ENCODE measurements at regions of chr16 and their contacts with region 1.

Region 1: GRCh38 chr16:84617791-84618580 is at the start of gene COTL1:
- DNase-seq: peak; percentile 86 to 96 (median 90)
- ATAC-seq: peak; percentile 94
- H3K4me3 ChIP-seq: peak within 1 kb of the TSS; percentile 70
- H3K4me3 Mint-ChIP-seq: peak within 1 kb of the TSS; percentile 95 to 99 (median 97)
- H3K27ac ChIP-seq: peak within 1 kb of the TSS; percentile 68
- H3K27ac Mint-ChIP-seq: peak within 1 kb of the TSS; percentile 82 to 95 (median 91)
- H3K4me1 ChIP-seq: peaks cover 32 to 39% of the 10 kb centered on the region in 2 donors
- H3K4me1 Mint-ChIP-seq: peaks cover 33 to 64% (median 53%) of the 10 kb centered on the region in 7 donors
- H3K27me3 ChIP-seq: no peaks in the 10 kb centered on the region
- H3K27me3 Mint-ChIP-seq: peaks cover 0 to 14% (median 0%) of the 10 kb centered on the region in 5 donors
- total RNA-seq, gene COTL1: 84.2 to 704 (median 172) TPM

Region 2: DNA sequence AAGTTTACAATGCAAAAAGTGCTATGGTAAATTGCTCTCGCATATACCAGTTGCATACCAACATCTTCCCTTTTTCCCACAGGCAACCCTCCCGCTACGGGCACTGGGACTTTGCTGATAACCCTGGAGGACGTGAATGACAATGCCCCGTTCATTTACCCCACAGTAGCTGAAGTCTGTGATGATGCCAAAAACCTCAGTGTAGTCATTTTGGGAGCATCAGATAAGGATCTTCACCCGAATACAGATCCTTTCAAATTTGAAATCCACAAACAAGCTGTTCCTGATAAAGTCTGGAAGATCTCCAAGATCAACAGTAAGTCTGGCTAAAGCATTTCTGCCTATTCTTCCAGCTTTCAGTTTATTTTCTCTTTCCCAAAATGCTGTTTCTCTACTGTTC is 838.1 kb before region 1 on chr16:
- CTCF ChIA-PET with region 1: no interaction called
- POLR2A ChIA-PET with region 1: no interaction called
- intact Hi-C with region 1: no loop called
- DNase-seq: no peak
- ATAC-seq: no peak
- H3K4me3 ChIP-seq: no peak overlapping the region
- H3K4me3 Mint-ChIP-seq: no peak overlapping the region
- H3K27ac ChIP-seq: no peak overlapping the region
- H3K27ac Mint-ChIP-seq: no peak overlapping the region
- H3K4me1 ChIP-seq: no peaks in the 10 kb centered on the region
- H3K4me1 Mint-ChIP-seq: no peaks in the 10 kb centered on the region
- H3K27me3 ChIP-seq: no peaks in the 10 kb centered on the region
- H3K27me3 Mint-ChIP-seq: peaks cover 8 to 28% (median 14%) of the 10 kb centered on the region in 5 donors

Region 3: GRCh38 chr16:84194470-84195200 is 423.4 kb before region 1 on chr16:
- CTCF ChIA-PET with region 1: no interaction called
- POLR2A ChIA-PET with region 1: no interaction called
- intact Hi-C with region 1: loop called in 1 of 2 experiments (anchors 5 kb)
- DNase-seq: peak in 7 of 9 donors; percentile 25 to 62 (median 48)
- ATAC-seq: peak; percentile 63
- H3K4me3 ChIP-seq: peak overlapping the region; percentile 28
- H3K4me3 Mint-ChIP-seq: peak overlapping the region; percentile 25 to 85 (median 75)
- H3K27ac ChIP-seq: peak overlapping the region; percentile 42
- H3K27ac Mint-ChIP-seq: peak overlapping the region; percentile 51 to 92 (median 72)
- H3K4me1 ChIP-seq: peaks cover 0 to 18% of the 10 kb centered on the region in 2 donors
- H3K4me1 Mint-ChIP-seq: peaks cover 18 to 20% (median 20%) of the 10 kb centered on the region in 7 donors
- H3K27me3 ChIP-seq: no peaks in the 10 kb centered on the region
- H3K27me3 Mint-ChIP-seq: peaks cover 0 to 4% (median 0%) of the 10 kb centered on the region in 5 donors

Region 4: DNA sequence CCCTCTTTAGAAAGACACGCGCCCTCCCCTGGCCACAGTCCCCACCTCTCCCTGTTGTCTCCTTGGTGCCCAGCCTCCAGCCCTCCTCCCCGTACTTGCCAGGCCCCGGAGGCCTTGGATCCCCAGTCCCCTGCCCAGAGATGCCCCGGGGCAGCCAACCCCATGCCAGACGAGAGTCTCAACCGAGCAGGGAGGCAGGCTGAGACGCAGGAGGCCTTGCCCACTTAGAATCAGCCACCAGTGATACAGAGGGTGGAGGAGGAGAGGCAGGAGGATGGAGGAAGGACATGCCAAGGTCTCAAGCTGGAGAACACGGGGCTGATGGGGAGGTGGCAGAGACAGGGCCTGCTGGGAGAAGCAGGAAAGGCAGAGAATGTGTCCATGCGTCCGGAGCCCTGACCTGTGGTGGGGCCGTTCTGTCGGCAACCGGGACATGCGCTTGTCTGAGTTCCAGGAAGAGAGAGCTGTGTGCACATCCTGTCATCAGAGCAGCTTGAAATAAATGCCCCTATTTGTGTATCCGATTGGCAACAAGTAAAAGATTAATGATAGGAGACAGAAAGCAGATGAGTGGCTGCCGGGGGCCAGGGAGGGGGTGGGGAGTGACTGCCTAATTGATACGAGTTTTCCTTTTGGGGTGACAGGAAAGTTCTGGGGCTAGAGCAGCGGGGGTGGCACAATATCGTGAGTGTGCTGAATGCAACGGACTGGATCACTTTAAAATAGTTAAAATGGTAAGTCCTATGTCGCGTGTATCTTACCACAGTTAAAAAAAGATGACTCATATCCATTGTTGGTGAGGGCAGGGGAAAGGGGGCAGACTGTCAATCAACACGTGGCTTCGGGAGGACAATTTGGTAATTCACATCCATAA is 68.8 kb before region 1 on chr16:
- CTCF ChIA-PET with region 1: interaction called, 13 read pairs
- POLR2A ChIA-PET with region 1: interaction called, 28 read pairs
- intact Hi-C with region 1: loop called (anchors 1 kb)
- DNase-seq: peak in 8 of 9 donors; percentile 42 to 64 (median 60)
- ATAC-seq: peak; percentile 69
- H3K4me3 ChIP-seq: peak overlapping the region; percentile 65
- H3K4me3 Mint-ChIP-seq: peak overlapping the region; percentile 81 to 95 (median 90)
- H3K27ac ChIP-seq: peak overlapping the region; percentile 75
- H3K27ac Mint-ChIP-seq: peak overlapping the region; percentile 91 to 100 (median 96)
- H3K4me1 ChIP-seq: peaks cover 41 to 45% of the 10 kb centered on the region in 2 donors
- H3K4me1 Mint-ChIP-seq: peaks cover 38 to 70% (median 67%) of the 10 kb centered on the region in 7 donors
- H3K27me3 ChIP-seq: no peaks in the 10 kb centered on the region
- H3K27me3 Mint-ChIP-seq: no peaks in the 10 kb centered on the region

Region 5: DNA sequence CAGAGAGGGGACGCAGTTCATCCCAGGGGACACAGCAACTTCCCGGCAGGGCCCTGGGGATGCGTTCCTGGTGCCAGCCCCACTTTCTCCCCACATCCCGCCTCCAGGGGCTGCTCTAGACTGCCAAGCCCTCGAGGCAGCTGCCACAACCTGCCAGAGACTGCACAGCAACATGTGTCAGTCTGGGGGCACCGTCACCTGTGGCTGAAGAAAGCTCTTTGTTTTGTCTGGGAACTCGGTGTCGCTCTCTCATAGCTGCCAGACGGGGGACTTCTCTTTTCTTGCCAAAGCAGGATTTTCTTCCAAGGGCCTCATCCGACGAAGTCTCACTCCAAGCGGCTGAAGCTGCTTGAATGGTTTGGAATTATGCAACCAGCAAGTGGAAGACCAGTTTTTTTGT is 43.8 kb before region 1 on chr16:
- CTCF ChIA-PET with region 1: no interaction called
- POLR2A ChIA-PET with region 1: no interaction called
- intact Hi-C with region 1: no loop called
- DNase-seq: no peak
- ATAC-seq: no peak
- H3K4me3 ChIP-seq: no peak overlapping the region
- H3K4me3 Mint-ChIP-seq: no peak overlapping the region
- H3K27ac ChIP-seq: no peak overlapping the region
- H3K27ac Mint-ChIP-seq: peak overlapping the region in 4 of 9 donors; percentile 41 to 77 (median 58)
- H3K4me1 ChIP-seq: peaks cover 0 to 28% of the 10 kb centered on the region in 2 donors
- H3K4me1 Mint-ChIP-seq: peaks cover 32 to 65% (median 45%) of the 10 kb centered on the region in 7 donors
- H3K27me3 ChIP-seq: no peaks in the 10 kb centered on the region
- H3K27me3 Mint-ChIP-seq: no peaks in the 10 kb centered on the region

Region 6: DNA sequence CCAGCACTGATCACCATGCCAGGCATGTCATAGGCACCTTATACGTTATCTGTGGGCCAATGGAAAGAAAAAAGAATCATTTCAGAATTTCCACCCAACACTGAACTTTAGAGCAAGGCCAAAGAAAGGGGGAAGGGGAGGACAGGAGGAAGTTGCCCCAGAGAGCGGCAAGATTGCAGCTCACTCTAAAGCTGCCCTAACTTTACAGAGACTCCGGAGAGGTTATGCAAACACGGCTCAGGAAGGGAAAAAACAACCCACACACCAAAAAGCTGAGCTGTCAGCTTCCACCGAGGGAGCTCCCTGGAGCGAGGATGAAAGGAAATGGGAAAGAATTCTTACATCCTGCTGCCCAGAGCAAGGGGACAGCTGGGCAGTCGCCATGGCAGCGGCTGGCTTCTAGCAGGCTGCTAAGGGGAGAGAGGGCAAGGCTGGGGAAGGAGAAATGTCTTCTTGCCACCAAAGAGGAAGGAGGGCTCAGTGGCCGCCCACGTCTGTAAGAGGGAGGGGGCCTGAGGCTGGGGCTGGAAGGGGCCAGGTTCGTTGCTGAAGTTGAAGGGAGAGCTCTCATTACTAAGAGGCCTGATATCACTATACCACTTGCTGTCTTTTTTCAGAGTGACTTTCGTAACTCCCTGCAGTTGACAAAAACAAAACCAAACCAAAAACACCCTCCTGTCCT is 18.3 kb before region 1 on chr16:
- CTCF ChIA-PET with region 1: interaction called, 20 read pairs
- POLR2A ChIA-PET with region 1: interaction called, 79 read pairs
- intact Hi-C with region 1: loop called (anchors 1 kb)
- DNase-seq: peak in 6 of 9 donors; percentile 41 to 78 (median 50)
- ATAC-seq: peak; percentile 39
- H3K4me3 ChIP-seq: peak overlapping the region; percentile 44
- H3K4me3 Mint-ChIP-seq: peak overlapping the region; percentile 78 to 94 (median 87)
- H3K27ac ChIP-seq: peak overlapping the region; percentile 87
- H3K27ac Mint-ChIP-seq: peak overlapping the region; percentile 90 to 98 (median 97)
- H3K4me1 ChIP-seq: peaks cover 82 to 90% of the 10 kb centered on the region in 2 donors
- H3K4me1 Mint-ChIP-seq: peaks cover 73 to 94% (median 88%) of the 10 kb centered on the region in 7 donors
- H3K27me3 ChIP-seq: no peaks in the 10 kb centered on the region
- H3K27me3 Mint-ChIP-seq: peaks cover 0 to 4% (median 0%) of the 10 kb centered on the region in 5 donors

Region 7: DNA sequence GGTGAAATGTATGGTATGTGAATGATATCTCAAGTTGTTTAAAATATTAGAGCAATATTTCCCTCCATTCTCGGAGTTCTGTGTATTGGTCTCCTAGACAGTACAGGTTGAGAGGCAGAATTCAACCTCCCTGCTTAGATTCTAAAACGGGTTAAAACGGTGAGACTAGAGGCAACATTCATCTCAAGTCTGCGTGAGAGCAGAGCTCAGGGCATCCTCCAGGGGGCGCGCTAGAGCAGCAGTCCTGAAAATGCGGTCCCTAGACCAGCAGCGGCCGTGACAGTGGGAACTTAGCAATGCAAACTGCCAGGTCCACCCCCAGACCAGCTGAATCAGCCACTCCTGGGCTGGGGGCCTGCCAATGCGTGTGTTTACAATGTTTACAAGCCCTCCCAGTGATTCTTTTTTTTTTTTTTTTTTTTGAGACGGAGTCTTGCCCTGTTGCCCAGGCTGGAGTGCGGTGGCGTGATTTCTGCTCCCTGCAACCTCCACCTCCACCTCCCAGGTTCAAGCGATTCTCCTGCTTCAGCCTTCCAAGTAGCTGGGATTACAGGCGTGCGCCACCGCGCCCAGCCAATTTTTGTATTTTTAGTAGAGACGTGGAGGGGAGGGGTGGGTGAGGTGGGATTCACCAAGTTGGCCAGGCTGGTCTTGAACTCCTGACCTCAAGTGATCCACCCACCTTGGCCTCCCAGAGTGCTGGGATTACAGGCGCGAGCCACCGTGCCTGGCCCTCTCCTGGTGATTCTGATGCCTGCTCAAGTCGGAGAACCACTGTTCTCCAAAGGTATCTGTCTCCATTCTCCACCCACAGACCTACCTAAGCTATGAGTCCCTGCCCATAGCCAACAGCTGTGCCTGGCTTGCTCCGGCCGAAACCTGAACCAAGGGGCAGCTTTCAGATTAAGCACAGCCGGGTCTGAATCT is 54.6 kb after region 1 on chr16:
- CTCF ChIA-PET with region 1: interaction called, 3 read pairs
- POLR2A ChIA-PET with region 1: no interaction called
- intact Hi-C with region 1: loop called in 1 of 2 experiments (anchors 1 kb)
- DNase-seq: peak; percentile 58 to 85 (median 74)
- ATAC-seq: peak; percentile 96
- H3K4me3 ChIP-seq: no peak overlapping the region
- H3K4me3 Mint-ChIP-seq: no peak overlapping the region
- H3K27ac ChIP-seq: no peak overlapping the region
- H3K27ac Mint-ChIP-seq: peak overlapping the region in 3 of 9 donors; percentile 6 to 54 (median 52)
- H3K4me1 ChIP-seq: no peaks in the 10 kb centered on the region
- H3K4me1 Mint-ChIP-seq: peaks cover 5 to 17% (median 8%) of the 10 kb centered on the region in 7 donors
- H3K27me3 ChIP-seq: no peaks in the 10 kb centered on the region
- H3K27me3 Mint-ChIP-seq: peaks cover 0 to 19% (median 0%) of the 10 kb centered on the region in 5 donors

Region 8: DNA sequence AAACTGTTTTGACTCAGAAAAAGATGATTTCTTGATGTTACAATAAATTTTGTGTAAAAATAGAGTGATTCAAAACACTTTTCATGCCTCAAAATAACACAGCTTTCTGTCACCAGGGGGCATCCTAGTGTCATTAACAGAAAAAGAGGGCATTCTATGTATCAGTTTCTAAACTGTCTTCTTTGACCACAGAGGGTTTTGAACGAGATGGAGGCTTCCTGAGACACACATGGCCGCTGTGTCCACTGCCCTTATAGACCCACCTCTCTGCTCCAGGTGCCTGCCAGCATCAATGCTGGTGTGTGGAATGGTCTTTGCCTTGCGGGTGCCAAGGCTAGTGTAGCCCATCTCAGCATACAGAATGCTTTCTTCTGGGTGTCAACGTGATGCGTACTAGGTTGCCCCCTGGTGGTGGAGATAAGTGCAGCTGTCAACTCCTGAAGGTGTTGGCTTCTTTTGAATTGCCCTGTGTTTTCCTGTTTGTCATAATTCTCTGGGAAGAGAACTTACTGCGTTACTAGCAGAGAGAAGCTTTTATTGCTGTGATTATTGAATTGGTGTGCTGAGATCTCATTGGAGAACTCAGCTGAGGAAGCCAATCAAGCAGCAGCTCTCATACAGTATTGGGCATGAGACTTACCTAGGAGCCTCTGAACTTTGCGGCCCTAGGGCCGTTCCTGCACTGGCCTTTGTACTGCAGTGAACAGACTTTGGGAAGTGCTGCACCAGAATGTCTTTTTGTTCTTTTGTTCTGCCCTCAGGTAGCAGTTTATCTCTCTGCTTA is 120.5 kb after region 1 on chr16:
- CTCF ChIA-PET with region 1: interaction called, 56 read pairs
- POLR2A ChIA-PET with region 1: interaction called, 6 read pairs
- intact Hi-C with region 1: loop called (anchors 1 kb)
- DNase-seq: peak; percentile 49 to 77 (median 72)
- ATAC-seq: peak; percentile 85
- H3K4me3 ChIP-seq: no peak overlapping the region
- H3K4me3 Mint-ChIP-seq: peak overlapping the region in 6 of 10 donors; percentile 6 to 76 (median 38)
- H3K27ac ChIP-seq: no peak overlapping the region
- H3K27ac Mint-ChIP-seq: peak overlapping the region in 8 of 9 donors; percentile 21 to 81 (median 64)
- H3K4me1 ChIP-seq: peaks cover 0 to 23% of the 10 kb centered on the region in 2 donors
- H3K4me1 Mint-ChIP-seq: peaks cover 38 to 61% (median 55%) of the 10 kb centered on the region in 7 donors
- H3K27me3 ChIP-seq: no peaks in the 10 kb centered on the region
- H3K27me3 Mint-ChIP-seq: no peaks in the 10 kb centered on the region